GM12878 (cell line): ENCODE measurements at regions of chr6 and their contacts with region 1.

Region 1: DNA sequence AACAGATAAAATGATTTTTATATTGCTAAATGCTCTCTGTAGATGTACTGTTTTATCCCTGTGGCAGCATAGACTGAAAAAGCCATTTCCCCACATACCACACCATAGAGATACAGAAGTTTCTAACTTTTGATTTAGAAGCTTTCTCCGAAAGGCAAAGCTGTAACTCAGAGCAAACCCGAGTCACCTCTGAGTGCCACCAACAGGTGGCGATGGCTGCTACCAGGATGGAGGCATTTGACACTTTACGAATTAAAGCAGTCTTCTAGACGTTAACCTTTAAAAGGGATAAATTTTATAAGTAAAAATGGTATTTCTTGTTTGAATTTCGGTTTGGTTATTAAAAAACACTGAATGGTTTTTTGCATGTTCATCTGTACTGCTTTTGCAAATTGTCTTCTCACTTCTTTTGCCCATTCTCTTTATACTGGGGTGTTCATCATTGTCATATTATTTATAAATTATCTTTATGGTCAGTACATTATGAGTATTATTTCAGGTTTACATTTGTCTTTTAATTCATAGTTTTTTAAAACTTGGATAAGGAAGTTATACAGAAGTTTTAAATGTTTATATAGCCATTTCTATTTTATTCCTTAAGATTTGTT is 201.0 kb upstream of the CEP162 start:
- DNase-seq: no peak
- ATAC-seq: peak; percentile 91
- H3K4me3 ChIP-seq: no peak overlapping the region
- H3K27ac ChIP-seq: no peak overlapping the region
- H3K4me1 ChIP-seq: no peaks in the 10 kb centered on the region
- H3K27me3 ChIP-seq: no peaks in the 10 kb centered on the region
- CTCF ChIP-seq: peak; percentile 74 to 79 (median 77)
- EP300 ChIP-seq: no peak
- POLR2A ChIP-seq: no peak
- RAD21 ChIP-seq: peak; percentile 69

Region 2: GRCh38 chr6:84380633-84381032 is 47.8 kb before region 1 on chr6:
- CTCF ChIA-PET with region 1: no interaction called
- POLR2A ChIA-PET with region 1: no interaction called
- RAD21 ChIA-PET with region 1: no interaction called
- SMC1A ChIA-PET with region 1: no interaction called
- in situ Hi-C with region 1: no loop called
- intact Hi-C with region 1: no loop called
- DNase-seq: no peak
- ATAC-seq: no peak
- H3K4me3 ChIP-seq: no peak overlapping the region
- H3K27ac ChIP-seq: no peak overlapping the region
- H3K4me1 ChIP-seq: no peaks in the 10 kb centered on the region
- H3K27me3 ChIP-seq: no peaks in the 10 kb centered on the region
- CTCF ChIP-seq: no peak
- EP300 ChIP-seq: no peak
- POLR2A ChIP-seq: no peak
- RAD21 ChIP-seq: no peak

Region 3: GRCh38 chr6:84411060-84411629 is 17.3 kb before region 1 on chr6:
- CTCF ChIA-PET with region 1: interaction called, 10 read pairs
- POLR2A ChIA-PET with region 1: no interaction called
- RAD21 ChIA-PET with region 1: interaction called, 10 read pairs
- SMC1A ChIA-PET with region 1: interaction called, 4 read pairs
- in situ Hi-C with region 1: no loop called
- intact Hi-C with region 1: no loop called
- DNase-seq: no peak
- ATAC-seq: peak; percentile 96
- H3K4me3 ChIP-seq: no peak overlapping the region
- H3K27ac ChIP-seq: no peak overlapping the region
- H3K4me1 ChIP-seq: no peaks in the 10 kb centered on the region
- H3K27me3 ChIP-seq: no peaks in the 10 kb centered on the region
- CTCF ChIP-seq: no peak
- EP300 ChIP-seq: peak; percentile 82 to 88; a peak in 2 of 4 replicates
- POLR2A ChIP-seq: no peak
- RAD21 ChIP-seq: no peak

Region 4: DNA sequence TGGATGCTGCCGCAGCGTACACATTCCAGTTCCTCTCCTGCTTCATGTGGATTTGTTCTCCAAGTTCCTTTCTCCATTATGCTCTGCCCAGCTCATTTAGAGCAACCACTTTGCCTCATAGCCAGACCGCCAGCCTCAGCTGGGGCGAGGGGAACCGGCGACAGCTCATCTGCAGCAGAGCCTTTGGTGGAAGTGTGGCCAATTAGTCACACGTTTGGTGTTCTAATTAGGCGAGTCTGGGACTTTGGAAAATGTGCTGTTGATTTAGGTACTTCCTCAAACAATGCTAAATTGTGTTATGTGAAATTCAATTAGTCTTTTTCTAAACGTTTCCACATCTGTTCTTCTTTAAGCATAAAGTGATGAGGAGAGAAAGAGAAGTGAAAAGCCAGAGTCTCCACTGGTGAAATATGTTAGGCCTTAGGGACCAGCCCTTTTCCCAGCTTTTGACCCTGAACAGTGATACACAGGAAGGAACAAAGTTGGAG is 118.1 kb after region 1 on chr6:
- CTCF ChIA-PET with region 1: interaction called, 5 read pairs
- POLR2A ChIA-PET with region 1: no interaction called
- RAD21 ChIA-PET with region 1: interaction called, 6 read pairs
- SMC1A ChIA-PET with region 1: interaction called, 3 read pairs
- in situ Hi-C with region 1: no loop called
- intact Hi-C with region 1: loop called (anchors 2 kb)
- DNase-seq: peak; percentile 52
- ATAC-seq: peak; percentile 87
- H3K4me3 ChIP-seq: no peak overlapping the region
- H3K27ac ChIP-seq: no peak overlapping the region
- H3K4me1 ChIP-seq: no peaks in the 10 kb centered on the region
- H3K27me3 ChIP-seq: no peaks in the 10 kb centered on the region
- CTCF ChIP-seq: no peak
- EP300 ChIP-seq: peak; percentile 84 to 90
- POLR2A ChIP-seq: no peak
- RAD21 ChIP-seq: no peak

Region 5: GRCh38 chr6:84575264-84575663 is 146.9 kb after region 1 on chr6:
- CTCF ChIA-PET with region 1: interaction called, 55 read pairs
- POLR2A ChIA-PET with region 1: no interaction called
- RAD21 ChIA-PET with region 1: interaction called, 5 read pairs
- SMC1A ChIA-PET with region 1: interaction called, 10 read pairs
- in situ Hi-C with region 1: no loop called
- intact Hi-C with region 1: no loop called
- DNase-seq: peak; percentile 61
- ATAC-seq: peak; percentile 99
- H3K4me3 ChIP-seq: no peak overlapping the region
- H3K27ac ChIP-seq: no peak overlapping the region
- H3K4me1 ChIP-seq: no peaks in the 10 kb centered on the region; the same call in 1 of the 2 replicates
- H3K27me3 ChIP-seq: no peaks in the 10 kb centered on the region
- CTCF ChIP-seq: no peak
- EP300 ChIP-seq: peak; percentile 96 to 98
- POLR2A ChIP-seq: no peak
- RAD21 ChIP-seq: no peak

Region 6: DNA sequence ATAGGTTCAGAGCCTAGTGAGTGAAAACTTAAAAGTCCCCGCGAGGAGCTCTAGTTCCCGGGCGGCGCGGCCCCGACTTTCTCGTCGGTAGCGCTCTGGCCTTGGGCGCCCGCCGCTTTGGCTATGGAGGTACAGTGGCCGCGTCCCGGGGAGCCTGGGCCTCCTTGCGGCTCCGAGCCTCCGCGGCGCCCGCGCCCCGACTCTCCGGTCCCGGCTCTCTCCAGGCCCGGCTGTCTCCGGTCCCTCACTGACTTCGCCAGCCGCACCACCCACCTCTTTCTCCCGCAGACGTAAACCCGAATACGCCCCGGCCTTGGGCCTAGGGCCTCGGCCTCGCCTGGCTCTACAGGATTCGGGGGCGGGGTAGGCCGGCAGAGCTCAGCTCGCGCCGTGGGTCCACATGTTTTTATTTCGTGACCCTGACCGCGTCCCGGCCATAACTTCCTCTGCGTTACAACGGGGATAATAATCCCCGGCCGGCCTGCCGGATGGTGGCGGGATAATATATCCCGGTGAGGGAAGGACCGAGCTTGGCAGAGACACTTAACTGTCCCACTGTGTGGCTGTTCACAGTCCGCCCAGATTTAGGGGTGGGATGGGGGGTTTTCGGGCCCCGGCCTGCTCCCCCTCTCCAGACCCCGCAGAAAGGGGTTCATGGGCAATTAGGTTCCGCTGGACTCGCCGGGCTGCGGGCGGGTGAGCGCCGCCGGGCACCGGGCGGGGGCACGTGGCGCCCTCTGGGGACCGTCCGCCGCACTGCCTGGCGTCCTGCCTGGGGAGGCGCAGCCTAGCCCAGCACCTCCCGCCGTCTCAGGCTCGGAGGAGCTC is 346.0 kb after region 1 on chr6:
- CTCF ChIA-PET with region 1: interaction called, 14 read pairs
- POLR2A ChIA-PET with region 1: no interaction called
- RAD21 ChIA-PET with region 1: interaction called, 8 read pairs
- SMC1A ChIA-PET with region 1: interaction called, 4 read pairs
- in situ Hi-C with region 1: no loop called
- intact Hi-C with region 1: loop called (anchors 1 kb)
- DNase-seq: no peak
- ATAC-seq: peak; percentile 90
- H3K4me3 ChIP-seq: no peak overlapping the region
- H3K27ac ChIP-seq: no peak overlapping the region
- H3K4me1 ChIP-seq: no peaks in the 10 kb centered on the region
- H3K27me3 ChIP-seq: peaks cover 2 to 4% of the 10 kb centered on the region in 2 experiments
- CTCF ChIP-seq: peak; percentile 17 to 44 (median 39); a peak in 4 of 6 replicates
- EP300 ChIP-seq: no peak
- POLR2A ChIP-seq: no peak
- RAD21 ChIP-seq: no peak

Region 7: GRCh38 chr6:84967389-84967788 is 539.0 kb after region 1 on chr6:
- CTCF ChIA-PET with region 1: interaction called, 13 read pairs
- POLR2A ChIA-PET with region 1: no interaction called
- RAD21 ChIA-PET with region 1: interaction called, 3 read pairs
- SMC1A ChIA-PET with region 1: interaction called, 10 read pairs
- in situ Hi-C with region 1: no loop called
- intact Hi-C with region 1: loop called (anchors 2 kb)
- DNase-seq: no peak
- ATAC-seq: peak; percentile 42; the same call in 1 of the 3 replicates
- H3K4me3 ChIP-seq: no peak overlapping the region
- H3K27ac ChIP-seq: no peak overlapping the region
- H3K4me1 ChIP-seq: no peaks in the 10 kb centered on the region
- H3K27me3 ChIP-seq: no peaks in the 10 kb centered on the region
- CTCF ChIP-seq: peak; percentile 27 to 41 (median 35); a peak in 4 of 6 replicates
- EP300 ChIP-seq: no peak
- POLR2A ChIP-seq: no peak
- RAD21 ChIP-seq: peak; percentile 56

Region 8: DNA sequence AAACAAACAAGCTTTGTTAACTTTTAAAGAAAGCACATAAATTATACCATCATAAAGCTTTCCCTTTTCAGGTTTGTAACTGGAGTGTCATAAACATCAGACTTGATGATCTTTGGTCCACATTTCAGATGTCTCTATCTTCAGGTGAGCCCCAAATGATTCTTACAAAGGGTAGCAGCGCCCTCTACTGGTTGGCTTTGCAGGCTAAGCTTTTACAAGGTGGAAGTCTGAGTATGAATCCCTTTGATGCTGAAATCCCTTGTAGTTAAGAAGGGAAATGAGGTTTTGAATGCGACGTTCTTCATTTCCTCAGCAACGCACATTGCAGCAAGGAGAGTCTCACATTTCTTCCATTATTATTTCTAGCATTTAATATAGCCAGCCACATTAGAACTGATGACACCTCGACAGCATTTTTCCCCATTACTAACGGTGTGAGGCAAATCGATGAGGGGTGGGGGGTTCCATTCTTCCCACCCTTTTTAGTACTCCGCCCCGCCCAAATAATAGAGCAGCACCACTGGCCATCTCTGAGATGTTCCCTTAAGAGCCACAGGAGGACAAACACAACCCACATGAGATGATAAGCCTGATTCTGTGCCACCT is 895.1 kb after region 1 on chr6:
- CTCF ChIA-PET with region 1: interaction called, 11 read pairs
- POLR2A ChIA-PET with region 1: no interaction called
- RAD21 ChIA-PET with region 1: no interaction called
- SMC1A ChIA-PET with region 1: interaction called, 3 read pairs
- in situ Hi-C with region 1: loop called (anchors 5 kb)
- intact Hi-C with region 1: loop called (anchors 2 kb)
- DNase-seq: peak; percentile 25
- ATAC-seq: peak; percentile 93
- H3K4me3 ChIP-seq: no peak overlapping the region
- H3K27ac ChIP-seq: no peak overlapping the region
- H3K4me1 ChIP-seq: no peaks in the 10 kb centered on the region
- H3K27me3 ChIP-seq: no peaks in the 10 kb centered on the region; a peak in 1 of 4 replicates
- CTCF ChIP-seq: peak; percentile 80 to 88 (median 84)
- EP300 ChIP-seq: no peak
- POLR2A ChIP-seq: no peak
- RAD21 ChIP-seq: peak; percentile 92